ENCODE measurements at regions of chr11 and their contacts with region 1.

Region 1: GRCh38 chr11:120203626-120204025 is 7.2 kb upstream of the OAF start:
- DNase-seq: no peak
- ATAC-seq: no peak
- H3K4me3 ChIP-seq: no peak overlapping the region
- H3K27ac ChIP-seq: no peak overlapping the region
- H3K4me1 ChIP-seq: no peaks in the 10 kb centered on the region
- H3K27me3 ChIP-seq: 0 out of 2 replicates have a peak, but pooled peaks cover 6% of the 10 kb centered on the region
- CTCF ChIP-seq: no peak

Region 2: DNA sequence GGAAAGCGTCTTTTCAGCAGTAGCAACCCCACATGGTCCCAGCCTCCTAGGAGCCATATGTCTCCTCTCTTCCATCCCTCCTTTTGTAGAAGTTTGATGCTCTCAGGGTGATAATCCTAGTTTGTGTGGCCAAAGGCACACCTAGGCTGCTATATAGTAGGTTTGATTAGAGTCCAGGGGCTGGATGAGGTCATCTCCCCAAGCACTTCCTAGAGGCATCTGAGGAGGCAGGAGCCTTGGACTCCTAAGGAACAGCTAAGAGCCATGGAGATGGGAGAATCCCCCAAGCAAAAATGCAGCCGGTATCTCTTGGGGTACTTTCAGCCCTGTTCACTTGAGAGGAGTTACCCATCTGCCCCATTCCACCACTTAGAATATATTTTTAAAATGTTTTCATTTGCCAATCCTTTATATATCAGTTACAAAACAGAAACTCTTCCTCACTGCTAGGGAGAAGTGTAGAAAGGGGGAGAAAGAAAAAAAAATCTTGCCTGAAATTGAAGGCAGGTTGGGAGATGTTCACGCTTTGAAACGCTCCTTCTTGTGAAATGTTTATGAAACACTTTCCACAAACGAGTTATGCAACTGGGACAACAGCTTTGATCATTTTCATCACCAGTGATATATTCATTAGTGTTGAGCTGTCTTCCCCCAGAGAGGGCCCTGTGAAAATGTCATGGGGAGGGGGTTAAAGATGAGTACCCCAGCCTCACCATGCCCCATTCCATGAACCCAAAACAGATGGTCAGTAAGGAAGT is 89.6 kb after region 1 on chr11:
- CTCF ChIA-PET with region 1: no interaction called
- POLR2A ChIA-PET with region 1: interaction called, 11 read pairs
- in situ Hi-C with region 1: no loop called
- intact Hi-C with region 1: no loop called
- DNase-seq: no peak
- ATAC-seq: no peak
- H3K4me3 ChIP-seq: no peak overlapping the region
- H3K27ac ChIP-seq: no peak overlapping the region
- H3K4me1 ChIP-seq: no peaks in the 10 kb centered on the region
- H3K27me3 ChIP-seq: peaks cover 62% of the 10 kb centered on the region
- CTCF ChIP-seq: no peak

Measured in Panc1 (cell line).